HEK293 (cell line): ENCODE measurements at regions of chr1 and their contacts with region 1.

Region 1: DNA sequence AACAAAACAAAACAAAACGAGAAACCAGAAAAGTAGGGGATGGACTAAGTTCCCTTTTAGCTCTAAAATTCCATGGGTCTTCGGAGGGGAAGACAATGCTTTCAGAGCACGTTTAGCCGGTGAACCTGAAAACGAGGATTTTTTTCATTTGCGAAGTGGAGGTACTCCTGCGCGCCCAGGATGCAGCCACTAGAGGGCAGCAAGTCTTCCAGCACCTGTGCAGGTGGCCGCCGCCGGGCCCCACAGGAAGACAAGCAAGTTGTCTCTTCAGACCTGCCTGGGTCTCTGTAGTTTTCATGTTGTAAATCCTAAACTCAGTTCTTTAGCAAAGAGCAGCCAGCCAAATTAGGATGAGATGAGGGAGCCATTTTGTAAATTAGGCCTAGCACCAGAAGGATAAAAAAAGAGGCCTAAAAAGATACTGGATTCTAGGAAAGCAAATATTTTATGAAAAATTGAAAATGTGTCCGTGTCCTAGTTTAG is 17.7 kb upstream of the SNX27 start:
- H3K4me3 ChIP-seq: no peak overlapping the region
- H3K27ac ChIP-seq: peak overlapping the region; percentile 8; the same call in 1 of the 2 replicates
- H3K4me1 ChIP-seq: peaks cover 11% of the 10 kb centered on the region
- CTCF ChIP-seq: peak; percentile 69; the same call in 1 of the 2 replicates

Region 2: GRCh38 chr1:151579436-151579835 is 14.7 kb before region 1 on chr1:
- CTCF ChIA-PET with region 1: interaction called, 11 read pairs
- POLR2A ChIA-PET with region 1: no interaction called
- H3K4me3 ChIP-seq: no peak overlapping the region
- H3K27ac ChIP-seq: no peak overlapping the region
- H3K4me1 ChIP-seq: no peaks in the 10 kb centered on the region
- CTCF ChIP-seq: no peak

Region 3: GRCh38 chr1:151620286-151620685 is 26.1 kb after region 1 on chr1:
- CTCF ChIA-PET with region 1: interaction called, 11 read pairs
- POLR2A ChIA-PET with region 1: interaction called, 3 read pairs
- H3K4me3 ChIP-seq: no peak overlapping the region
- H3K27ac ChIP-seq: no peak overlapping the region
- H3K4me1 ChIP-seq: peaks cover 34% of the 10 kb centered on the region
- CTCF ChIP-seq: no peak

Region 4: GRCh38 chr1:151644001-151644400 is 49.8 kb after region 1 on chr1:
- CTCF ChIA-PET with region 1: no interaction called
- POLR2A ChIA-PET with region 1: no interaction called
- H3K4me3 ChIP-seq: no peak overlapping the region
- H3K27ac ChIP-seq: no peak overlapping the region
- H3K4me1 ChIP-seq: peaks cover 5% of the 10 kb centered on the region
- CTCF ChIP-seq: no peak

Region 5: DNA sequence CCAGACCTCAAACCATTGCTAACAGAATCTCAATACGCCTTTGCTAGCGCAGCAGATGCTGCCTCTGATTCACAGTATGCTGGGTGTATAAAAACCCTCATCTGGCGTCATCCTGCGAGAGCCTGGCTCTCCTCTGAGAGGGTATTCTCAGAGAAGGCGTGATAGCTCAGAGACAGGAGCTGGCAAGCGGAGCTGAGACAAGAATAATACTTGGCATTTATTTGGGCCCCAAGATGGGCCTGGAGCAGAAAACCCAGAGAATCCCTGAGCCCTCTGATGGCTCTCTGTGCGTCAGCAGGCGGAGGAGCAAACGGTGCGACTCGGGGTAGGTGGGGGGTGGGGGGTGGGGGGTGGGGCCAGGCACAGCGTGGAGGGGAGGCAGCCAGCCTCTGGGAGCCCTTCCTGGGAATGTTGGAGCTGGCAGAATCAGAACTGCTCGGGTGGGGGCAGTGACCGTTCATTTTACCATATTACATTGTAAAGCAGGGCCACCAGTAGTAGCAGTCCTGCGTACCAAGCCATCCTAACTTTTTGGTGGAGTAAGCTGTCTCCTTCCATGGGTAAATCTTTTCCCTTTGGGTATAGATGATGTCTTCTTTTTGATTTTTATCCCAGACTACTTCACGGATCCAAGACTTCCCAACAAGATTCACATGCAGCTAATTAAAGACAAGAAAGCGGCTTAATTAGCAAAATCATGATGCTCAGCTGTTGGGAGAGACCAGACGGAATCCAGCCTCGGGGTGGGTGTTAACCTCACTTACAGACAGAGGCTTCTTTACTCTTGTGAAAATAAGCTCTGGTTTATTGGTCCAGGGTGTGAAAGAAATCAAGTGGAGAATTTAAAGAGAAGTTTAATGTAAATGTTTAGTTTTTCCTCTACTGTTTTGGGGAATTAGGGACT is 134.2 kb after region 1 on chr1:
- CTCF ChIA-PET with region 1: interaction called, 34 read pairs
- POLR2A ChIA-PET with region 1: no interaction called
- H3K4me3 ChIP-seq: no peak overlapping the region
- H3K27ac ChIP-seq: no peak overlapping the region
- H3K4me1 ChIP-seq: no peaks in the 10 kb centered on the region
- CTCF ChIP-seq: no peak